CD4-positive, alpha-beta T cell (primary cell): ENCODE measurements at regions of chr5 and their contacts with region 1.

Region 1: GRCh38 chr5:77775790-77776553 is at the start of gene TBCA:
- DNase-seq: peak; percentile 78 to 98 (median 89)
- ATAC-seq: peak; percentile 82
- H3K4me3 ChIP-seq: peak within 1 kb of the TSS; percentile 79
- H3K4me3 Mint-ChIP-seq: peak within 1 kb of the TSS; percentile 94
- H3K27ac ChIP-seq: peak within 1 kb of the TSS; percentile 89 to 92
- H3K27ac Mint-ChIP-seq: peak within 1 kb of the TSS; percentile 95
- H3K4me1 ChIP-seq: peaks cover 34% of the 10 kb centered on the region
- H3K4me1 Mint-ChIP-seq: peaks cover 53% of the 10 kb centered on the region
- H3K27me3 ChIP-seq: no peaks in the 10 kb centered on the region
- H3K27me3 Mint-ChIP-seq: no peaks in the 10 kb centered on the region
- CTCF ChIP-seq: peak; percentile 34
- total RNA-seq, gene TBCA: 72.0 to 72.9 TPM

Region 2: GRCh38 chr5:77630258-77631089 is 145.5 kb before region 1 on chr5:
- CTCF ChIA-PET with region 1: no interaction called
- POLR2A ChIA-PET with region 1: interaction called, 3 read pairs
- intact Hi-C with region 1: loop called in 1 of 2 experiments (anchors 10 kb)
- DNase-seq: peak in 7 of 14 experiments; percentile 16 to 56 (median 35)
- ATAC-seq: peak; percentile 80
- H3K4me3 ChIP-seq: peak overlapping the region; percentile 45
- H3K4me3 Mint-ChIP-seq: peak overlapping the region; percentile 90
- H3K27ac ChIP-seq: no peak overlapping the region
- H3K27ac Mint-ChIP-seq: no peak overlapping the region
- H3K4me1 ChIP-seq: peaks cover 38% of the 10 kb centered on the region
- H3K4me1 Mint-ChIP-seq: peaks cover 25% of the 10 kb centered on the region
- H3K27me3 ChIP-seq: peaks cover 64 to 89% of the 10 kb centered on the region in 2 experiments
- H3K27me3 Mint-ChIP-seq: peaks cover 90% of the 10 kb centered on the region
- CTCF ChIP-seq: no peak

Region 3: GRCh38 chr5:77683171-77683732 is 92.7 kb before region 1 on chr5:
- CTCF ChIA-PET with region 1: no interaction called
- POLR2A ChIA-PET with region 1: no interaction called
- intact Hi-C with region 1: no loop called
- DNase-seq: no peak
- ATAC-seq: no peak
- H3K4me3 ChIP-seq: no peak overlapping the region
- H3K4me3 Mint-ChIP-seq: no peak overlapping the region
- H3K27ac ChIP-seq: no peak overlapping the region
- H3K27ac Mint-ChIP-seq: no peak overlapping the region
- H3K4me1 ChIP-seq: no peaks in the 10 kb centered on the region
- H3K4me1 Mint-ChIP-seq: no peaks in the 10 kb centered on the region
- H3K27me3 ChIP-seq: no peaks in the 10 kb centered on the region
- H3K27me3 Mint-ChIP-seq: peaks cover 10% of the 10 kb centered on the region
- CTCF ChIP-seq: no peak

Region 4: DNA sequence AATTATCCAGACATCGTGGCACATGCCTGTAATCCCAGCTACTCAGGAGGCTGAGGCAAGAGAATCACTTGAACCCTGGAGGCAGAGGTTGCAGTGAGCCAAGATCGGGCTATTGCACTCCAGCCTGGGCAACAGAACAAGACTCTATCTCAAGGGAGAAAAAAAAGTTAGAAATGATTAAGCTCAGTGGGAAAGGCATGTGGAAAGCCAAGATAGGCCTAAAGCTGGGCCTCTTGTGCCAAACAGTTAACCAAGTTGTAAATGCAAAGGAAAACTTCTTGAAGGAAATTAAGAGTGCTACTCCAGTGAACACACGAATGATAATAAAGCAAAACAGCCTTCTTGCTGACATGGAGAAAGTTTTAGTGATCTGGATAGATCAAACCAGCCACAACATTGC is 42.8 kb before region 1 on chr5:
- CTCF ChIA-PET with region 1: no interaction called
- POLR2A ChIA-PET with region 1: no interaction called
- intact Hi-C with region 1: no loop called
- DNase-seq: no peak
- ATAC-seq: no peak
- H3K4me3 ChIP-seq: no peak overlapping the region
- H3K4me3 Mint-ChIP-seq: no peak overlapping the region
- H3K27ac ChIP-seq: no peak overlapping the region
- H3K27ac Mint-ChIP-seq: no peak overlapping the region
- H3K4me1 ChIP-seq: no peaks in the 10 kb centered on the region
- H3K4me1 Mint-ChIP-seq: peaks cover 56% of the 10 kb centered on the region
- H3K27me3 ChIP-seq: no peaks in the 10 kb centered on the region
- H3K27me3 Mint-ChIP-seq: no peaks in the 10 kb centered on the region
- CTCF ChIP-seq: no peak

Region 5: GRCh38 chr5:77758141-77758938 is 17.6 kb before region 1 on chr5:
- CTCF ChIA-PET with region 1: no interaction called
- POLR2A ChIA-PET with region 1: no interaction called
- intact Hi-C with region 1: no loop called
- DNase-seq: no peak
- ATAC-seq: no peak
- H3K4me3 ChIP-seq: no peak overlapping the region
- H3K4me3 Mint-ChIP-seq: no peak overlapping the region
- H3K27ac ChIP-seq: no peak overlapping the region
- H3K27ac Mint-ChIP-seq: no peak overlapping the region
- H3K4me1 ChIP-seq: peaks cover 5% of the 10 kb centered on the region
- H3K4me1 Mint-ChIP-seq: peaks cover 50% of the 10 kb centered on the region
- H3K27me3 ChIP-seq: no peaks in the 10 kb centered on the region
- H3K27me3 Mint-ChIP-seq: no peaks in the 10 kb centered on the region
- CTCF ChIP-seq: no peak

Region 6: DNA sequence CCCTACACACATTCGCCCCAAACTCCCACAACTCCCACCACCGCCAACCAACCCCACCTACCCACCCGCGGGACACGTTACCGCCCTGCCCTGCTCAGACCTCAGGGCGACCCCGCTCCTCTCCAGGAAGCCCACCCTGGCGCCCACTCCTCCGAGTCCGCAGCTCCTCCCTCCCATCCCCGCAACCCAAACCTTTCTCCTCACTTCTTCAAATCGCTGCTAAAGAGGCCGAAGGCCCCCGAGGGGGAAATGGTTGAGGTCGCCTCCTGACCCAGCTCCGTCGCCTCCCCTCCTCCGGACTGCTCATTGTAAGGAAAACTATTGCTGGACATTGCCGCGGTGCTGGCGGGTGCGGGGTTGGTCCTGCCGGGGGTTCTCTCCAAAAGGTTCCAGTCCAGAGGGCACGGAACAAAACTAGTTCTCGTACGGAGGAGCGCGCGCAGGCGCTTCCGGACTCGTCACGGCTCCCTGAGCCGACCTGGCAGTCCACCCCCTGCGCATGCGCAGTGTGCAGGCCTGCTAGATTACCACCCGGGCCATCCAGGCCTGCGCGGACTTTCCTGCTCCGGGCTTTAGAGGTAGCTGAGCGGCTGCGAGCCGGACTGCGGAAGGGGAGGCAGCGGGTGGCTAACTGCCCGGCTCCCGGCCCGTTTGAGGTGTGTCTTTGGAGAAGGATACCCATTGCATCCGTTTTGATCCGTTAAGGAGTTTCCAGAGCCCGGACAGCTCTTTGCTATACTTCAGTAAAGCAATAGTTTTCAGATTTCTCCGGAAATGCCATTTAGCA is 518.5 kb after region 1 on chr5 and contains the start of gene AP3B1:
- CTCF ChIA-PET with region 1: no interaction called
- POLR2A ChIA-PET with region 1: interaction called, 3 read pairs
- intact Hi-C with region 1: loop called (anchors 2 to 5 kb)
- DNase-seq: peak; percentile 92 to 99 (median 96)
- ATAC-seq: peak; percentile 90
- H3K4me3 ChIP-seq: peak within 1 kb of the TSS; percentile 96
- H3K4me3 Mint-ChIP-seq: peak within 1 kb of the TSS; percentile 96
- H3K27ac ChIP-seq: peak within 1 kb of the TSS; percentile 70 to 81
- H3K27ac Mint-ChIP-seq: peak within 1 kb of the TSS; percentile 94
- H3K4me1 ChIP-seq: peaks cover 19% of the 10 kb centered on the region
- H3K4me1 Mint-ChIP-seq: peaks cover 44% of the 10 kb centered on the region
- H3K27me3 ChIP-seq: no peaks in the 10 kb centered on the region
- H3K27me3 Mint-ChIP-seq: no peaks in the 10 kb centered on the region
- CTCF ChIP-seq: no peak
- total RNA-seq, gene AP3B1: 24.5 to 24.6 TPM

Region 7: DNA sequence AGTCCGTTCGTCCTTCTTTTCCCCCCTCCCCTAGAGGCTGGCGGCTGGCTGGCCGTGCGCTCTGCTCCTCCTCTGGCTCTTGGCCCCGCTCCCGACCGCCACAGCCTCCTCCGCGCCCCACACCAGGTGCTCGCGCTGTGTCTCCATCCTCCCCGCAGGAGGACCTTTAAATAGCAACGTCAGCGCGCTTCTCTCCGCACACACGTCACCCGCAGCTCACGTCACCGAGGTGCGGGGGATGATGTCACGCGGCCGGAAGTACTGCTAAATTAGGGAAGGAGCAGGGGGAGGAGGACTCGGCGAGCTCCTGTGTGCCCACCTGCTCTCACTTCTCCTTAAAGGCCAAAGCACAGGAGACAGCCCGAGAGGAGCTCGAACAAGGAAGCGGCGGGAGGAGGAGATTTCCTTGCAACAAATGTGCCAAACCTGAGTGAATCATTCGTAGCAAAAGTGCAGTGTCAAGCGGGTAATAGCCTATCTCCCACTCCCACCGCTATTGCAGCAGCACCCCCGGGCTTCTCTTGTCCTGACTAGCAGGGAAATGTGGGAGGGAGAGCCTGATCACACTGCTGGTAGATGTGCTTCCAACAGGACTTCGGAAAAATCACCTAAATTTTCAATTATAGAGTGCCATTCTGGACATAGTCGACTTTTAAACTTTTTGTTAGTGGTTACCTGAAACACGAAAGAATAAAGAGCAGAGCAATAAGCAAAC is 1738.6 kb after region 1 on chr5:
- CTCF ChIA-PET with region 1: no interaction called
- POLR2A ChIA-PET with region 1: no interaction called
- intact Hi-C with region 1: loop called in 1 of 2 experiments (anchors 5 kb)
- DNase-seq: peak; percentile 76 to 97 (median 87)
- ATAC-seq: peak; percentile 85
- H3K4me3 ChIP-seq: peak overlapping the region; percentile 79
- H3K4me3 Mint-ChIP-seq: peak overlapping the region; percentile 98
- H3K27ac ChIP-seq: peak overlapping the region; percentile 69 to 89
- H3K27ac Mint-ChIP-seq: peak overlapping the region; percentile 96
- H3K4me1 ChIP-seq: peaks cover 19% of the 10 kb centered on the region
- H3K4me1 Mint-ChIP-seq: peaks cover 41% of the 10 kb centered on the region
- H3K27me3 ChIP-seq: peaks cover 5 to 15% of the 10 kb centered on the region in 2 experiments
- H3K27me3 Mint-ChIP-seq: peaks cover 34% of the 10 kb centered on the region
- CTCF ChIP-seq: no peak